ENCODE measurements at regions of chr12 and their contacts with region 1.

Region 1: DNA sequence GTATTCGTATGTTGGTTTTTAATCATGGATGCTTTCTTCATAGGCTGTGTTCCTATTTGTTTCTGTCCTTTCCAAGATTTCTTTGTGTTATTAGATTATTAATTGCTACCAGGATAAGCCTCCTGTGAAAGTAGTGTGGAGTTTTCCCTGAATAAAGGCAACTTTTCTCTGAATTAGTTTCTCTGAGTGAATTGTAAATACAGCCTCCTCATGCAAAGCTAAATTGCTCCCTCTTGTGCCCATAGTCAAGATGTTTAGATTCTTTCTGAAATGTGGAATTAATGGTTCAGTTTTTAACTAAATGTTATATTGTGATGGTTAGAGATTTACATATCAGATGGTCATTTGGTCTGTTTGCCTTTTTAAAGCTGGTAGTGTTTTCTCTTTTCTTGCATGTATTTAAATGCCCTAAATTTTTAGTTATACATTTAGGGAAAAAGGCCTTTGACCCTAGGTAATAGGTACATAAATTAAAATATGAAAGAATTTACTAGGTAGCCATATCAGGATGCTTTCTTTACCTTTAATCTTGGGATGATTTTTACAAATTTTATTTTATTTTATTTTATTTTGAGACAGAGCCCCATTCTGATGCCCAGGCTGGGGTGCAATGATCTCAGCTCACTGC is 8.9 kb downstream of the APAF1 start:
- DNase-seq: peak; percentile 75
- H3K4me3 Mint-ChIP-seq: no peak overlapping the region
- H3K27ac Mint-ChIP-seq: no peak overlapping the region
- H3K4me1 Mint-ChIP-seq: peaks cover 18% of the 10 kb centered on the region
- H3K27me3 Mint-ChIP-seq: no peaks in the 10 kb centered on the region

Region 2: GRCh38 chr12:97501422-97501821 is 1152.6 kb before region 1 on chr12:
- intact Hi-C with region 1: no loop called
- DNase-seq: no peak
- H3K4me3 Mint-ChIP-seq: no peak overlapping the region
- H3K27ac Mint-ChIP-seq: no peak overlapping the region
- H3K4me1 Mint-ChIP-seq: no peaks in the 10 kb centered on the region
- H3K27me3 Mint-ChIP-seq: no peaks in the 10 kb centered on the region

Region 3: GRCh38 chr12:98470469-98471082 is 183.4 kb before region 1 on chr12:
- intact Hi-C with region 1: no loop called
- DNase-seq: no peak
- H3K4me3 Mint-ChIP-seq: no peak overlapping the region
- H3K27ac Mint-ChIP-seq: no peak overlapping the region
- H3K4me1 Mint-ChIP-seq: peaks cover 2% of the 10 kb centered on the region
- H3K27me3 Mint-ChIP-seq: peaks cover 10% of the 10 kb centered on the region

Region 4: GRCh38 chr12:98561846-98562245 is 92.1 kb before region 1 on chr12:
- intact Hi-C with region 1: loop called (anchors 1 kb)
- DNase-seq: no peak
- H3K4me3 Mint-ChIP-seq: no peak overlapping the region
- H3K27ac Mint-ChIP-seq: no peak overlapping the region
- H3K4me1 Mint-ChIP-seq: peaks cover 4% of the 10 kb centered on the region
- H3K27me3 Mint-ChIP-seq: no peaks in the 10 kb centered on the region